Lower leg skin (tissue), 4 donors: ENCODE measurements at regions of chr17 and their contacts with region 1.

Region 1: DNA sequence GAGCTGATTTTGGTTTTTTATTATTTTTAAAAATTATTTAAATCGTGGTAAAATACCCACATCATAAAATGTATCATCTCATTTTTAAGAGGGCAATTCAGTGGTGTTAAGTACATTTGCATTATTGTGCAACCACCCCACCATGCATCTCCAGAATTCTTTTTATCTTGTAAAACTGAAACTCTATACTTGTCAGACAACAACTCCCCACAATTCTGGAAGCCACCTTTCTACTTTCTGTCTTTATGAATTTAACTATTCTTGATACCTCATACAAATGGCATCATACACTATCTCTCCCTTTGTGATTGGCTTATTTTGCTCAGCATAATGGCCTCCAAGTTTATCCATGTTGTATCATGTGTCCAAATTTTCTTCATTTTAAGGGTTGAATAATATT is 97.9 kb downstream of the HS3ST3B1 start:
- DNase-seq: no peak
- H3K4me3 ChIP-seq: no peak overlapping the region
- CTCF ChIP-seq: no peak
- POLR2A ChIP-seq: no peak

Region 2: DNA sequence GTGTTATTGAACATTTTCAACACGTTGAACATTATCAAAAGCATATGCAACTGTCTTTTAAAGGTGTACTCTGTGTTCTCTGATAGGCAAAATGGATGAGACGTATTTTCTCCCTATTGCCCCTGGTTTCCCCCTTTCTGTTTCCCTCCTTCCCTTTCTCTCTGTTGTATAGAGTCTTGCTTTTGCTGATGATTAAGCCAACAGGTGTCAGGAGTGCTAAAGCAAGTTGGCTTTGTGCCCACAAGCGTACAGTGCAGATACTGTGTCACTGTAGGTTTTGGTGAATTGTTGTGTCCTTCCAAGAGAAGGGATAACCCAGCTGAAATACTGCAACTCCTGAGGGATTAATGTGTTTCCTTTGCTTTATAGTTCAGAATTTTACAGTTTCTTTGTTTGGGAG is 255.1 kb before region 1 on chr17:
- intact Hi-C with region 1: no loop called
- DNase-seq: no peak
- H3K4me3 ChIP-seq: no peak overlapping the region
- CTCF ChIP-seq: no peak
- POLR2A ChIP-seq: no peak

Region 3: GRCh38 chr17:14451729-14452191 is 53.0 kb after region 1 on chr17:
- intact Hi-C with region 1: loop called (anchors 2 kb)
- DNase-seq: no peak
- H3K4me3 ChIP-seq: no peak overlapping the region
- CTCF ChIP-seq: no peak
- POLR2A ChIP-seq: no peak